ENCODE measurements at regions of chr7 and their contacts with region 1.

Region 1: DNA sequence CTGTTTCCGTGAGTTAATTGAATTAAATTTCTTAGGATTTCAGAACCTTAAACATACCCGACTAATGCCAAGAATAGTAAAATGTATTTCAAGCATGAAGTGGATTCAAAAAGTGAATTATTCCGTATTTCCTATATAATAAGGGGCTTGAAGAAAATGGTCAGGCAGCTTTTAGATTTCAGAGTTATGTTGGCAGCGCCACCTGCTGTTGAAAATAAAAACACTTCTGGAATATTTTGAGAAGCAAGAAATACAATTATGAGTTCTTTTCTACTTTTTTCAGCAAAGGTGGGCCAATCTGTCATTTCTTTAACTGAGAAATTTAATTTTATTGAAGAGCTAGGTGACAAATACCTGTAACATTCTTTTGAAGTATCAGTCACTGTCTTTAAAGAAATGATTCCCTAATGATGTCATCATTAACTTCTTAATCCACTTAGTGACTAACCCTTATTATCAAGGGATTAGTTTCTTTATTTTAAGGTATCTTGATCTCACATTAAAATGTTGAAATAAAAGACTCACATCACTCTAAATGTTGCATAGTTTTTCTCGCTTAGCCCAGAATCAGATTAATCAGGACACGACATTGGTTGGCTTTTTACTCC is 36.6 kb upstream of the AGR3 start:
- DNase-seq: peak; percentile 42 to 75 (median 65)
- H3K4me3 ChIP-seq: no peak overlapping the region
- H3K27ac ChIP-seq: no peak overlapping the region
- H3K4me1 ChIP-seq: peaks cover 0 to 3% (median 1%) of the 10 kb centered on the region in 4 experiments
- H3K27me3 ChIP-seq: no peaks in the 10 kb centered on the region

Region 2: DNA sequence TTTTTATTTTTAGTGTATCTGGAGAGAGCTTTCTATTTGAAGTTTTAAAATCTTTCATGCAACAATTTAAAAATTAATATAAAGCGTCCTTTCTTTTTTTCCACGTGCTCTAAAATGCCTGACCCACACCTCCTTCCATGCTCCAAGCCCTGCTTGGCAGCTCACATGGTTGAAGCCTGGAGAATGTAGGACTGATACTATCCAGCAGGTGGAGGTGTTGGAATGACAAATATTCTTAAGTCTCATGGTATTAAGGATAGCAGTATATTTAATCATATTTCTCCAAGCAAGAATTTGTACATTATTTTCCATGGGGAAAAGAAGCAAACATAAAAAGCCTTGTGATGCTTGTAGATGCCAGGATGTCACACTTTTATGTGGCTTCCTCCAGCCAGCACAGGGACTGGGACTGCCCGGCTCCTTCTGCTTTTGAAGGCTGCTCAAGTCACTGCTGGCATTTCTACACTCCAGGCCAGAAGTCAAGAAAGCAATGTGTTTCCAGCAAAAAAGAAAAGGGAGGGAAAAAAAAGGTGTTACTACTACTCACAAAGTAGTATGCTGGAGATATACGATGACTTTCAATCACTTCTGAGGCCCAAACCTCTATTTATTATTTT is 222.7 kb before region 1 on chr7:
- CTCF ChIA-PET with region 1: interaction called, 15 read pairs
- POLR2A ChIA-PET with region 1: no interaction called
- DNase-seq: peak; percentile 55 to 76 (median 71)
- H3K4me3 ChIP-seq: no peak overlapping the region
- H3K27ac ChIP-seq: no peak overlapping the region
- H3K4me1 ChIP-seq: no peaks in the 10 kb centered on the region
- H3K27me3 ChIP-seq: no peaks in the 10 kb centered on the region

Region 3: GRCh38 chr7:16891338-16891737 is 27.1 kb before region 1 on chr7:
- CTCF ChIA-PET with region 1: interaction called, 34 read pairs
- POLR2A ChIA-PET with region 1: no interaction called
- DNase-seq: peak; percentile 52 to 78 (median 68)
- H3K4me3 ChIP-seq: peak overlapping the region in 1 of 7 experiments; percentile 12
- H3K27ac ChIP-seq: no peak overlapping the region
- H3K4me1 ChIP-seq: peaks cover 0 to 2% (median 0%) of the 10 kb centered on the region in 4 experiments
- H3K27me3 ChIP-seq: no peaks in the 10 kb centered on the region

Measured in common myeloid progenitor, CD34-positive (primary cell).